ENCODE measurements at regions of chr11 and their contacts with region 1.

Region 1: DNA sequence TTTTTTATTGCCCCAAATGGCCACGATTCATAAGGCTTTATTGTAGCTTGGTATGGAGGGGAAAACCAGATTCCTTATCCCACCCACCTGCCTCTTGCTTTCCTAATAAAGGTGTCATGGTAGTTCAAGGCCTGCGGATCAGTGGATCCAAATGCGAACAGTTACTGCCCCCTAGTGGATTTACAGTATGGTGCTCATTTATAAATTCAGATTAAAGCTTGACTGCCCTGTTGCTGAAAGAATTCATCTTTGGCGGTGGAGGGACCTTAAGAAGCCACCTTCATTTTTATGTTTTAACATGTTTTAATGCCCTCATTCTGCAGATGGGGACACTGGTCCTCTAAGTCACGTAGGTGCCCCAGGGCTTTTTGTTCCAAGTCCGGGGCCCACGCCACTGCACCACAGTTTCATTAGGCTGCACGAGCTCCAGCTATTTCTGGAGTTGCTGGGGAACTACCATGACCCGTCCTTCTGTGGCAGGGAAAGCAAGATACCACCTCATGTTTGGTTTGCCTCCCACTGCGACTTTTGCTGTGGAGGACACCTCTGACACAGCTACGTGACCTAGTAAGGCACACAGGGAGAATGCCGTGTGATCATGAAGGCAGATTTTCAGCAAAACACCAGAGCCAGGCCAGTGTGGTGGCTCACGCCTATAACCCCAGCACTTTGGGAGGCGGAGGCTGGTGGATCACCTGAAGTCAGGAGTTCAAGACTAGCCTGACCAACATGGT is 15.6 kb upstream of the INCENP start:
- DNase-seq: peak; percentile 65
- ATAC-seq: peak; percentile 73
- H3K4me3 ChIP-seq: no peak overlapping the region
- H3K27ac ChIP-seq: no peak overlapping the region
- H3K4me1 ChIP-seq: peaks cover 30% of the 10 kb centered on the region
- H3K27me3 ChIP-seq: peaks cover 0 to 6% of the 10 kb centered on the region in 2 experiments; a peak in 2 of 5 replicates
- CTCF ChIP-seq: peak; percentile 84
- EP300 ChIP-seq: no peak
- POLR2A ChIP-seq: no peak
- RAD21 ChIP-seq: peak; percentile 76

Region 2: DNA sequence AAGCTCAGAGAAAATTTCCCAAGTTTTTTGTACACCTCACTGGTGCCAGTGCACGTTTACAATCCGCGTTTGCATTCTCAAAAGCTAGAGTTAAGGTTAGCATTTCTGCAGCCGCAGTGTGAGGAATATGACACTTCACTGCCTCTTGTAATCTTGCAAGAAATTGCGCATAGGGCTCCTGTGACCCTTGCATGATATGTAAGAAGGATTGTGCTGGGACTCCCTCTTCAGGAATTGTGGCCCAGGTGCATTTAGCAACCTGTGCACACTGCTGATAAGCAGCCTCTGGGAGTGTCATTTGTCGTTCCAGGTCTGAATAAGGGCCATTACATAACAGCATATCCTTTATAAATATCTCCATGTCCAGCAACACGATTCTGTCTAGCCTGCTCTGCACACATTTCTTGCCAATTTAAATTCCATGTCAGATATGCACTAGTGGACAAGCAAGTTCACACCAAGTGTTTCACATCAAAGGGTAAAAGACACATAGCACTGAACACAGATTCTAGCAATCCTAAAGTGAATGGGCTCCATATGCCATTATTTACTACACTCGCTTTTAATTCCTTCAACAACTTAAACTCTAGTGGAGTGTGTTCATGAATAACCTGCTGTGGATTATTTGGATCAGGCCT is 53.6 kb before region 1 on chr11:
- CTCF ChIA-PET with region 1: no interaction called
- POLR2A ChIA-PET with region 1: no interaction called
- in situ Hi-C with region 1: no loop called
- intact Hi-C with region 1: no loop called
- DNase-seq: peak; percentile 78
- ATAC-seq: peak; percentile 66; the same call in 2 of the 3 replicates
- H3K4me3 ChIP-seq: no peak overlapping the region
- H3K27ac ChIP-seq: no peak overlapping the region
- H3K4me1 ChIP-seq: peaks cover 27% of the 10 kb centered on the region
- H3K27me3 ChIP-seq: peaks cover 0 to 3% of the 10 kb centered on the region in 2 experiments; a peak in 2 of 5 replicates
- CTCF ChIP-seq: peak; percentile 91
- EP300 ChIP-seq: no peak
- POLR2A ChIP-seq: no peak
- RAD21 ChIP-seq: peak; percentile 82

Region 3: GRCh38 chr11:62081378-62082291 is 26.5 kb before region 1 on chr11:
- CTCF ChIA-PET with region 1: no interaction called
- POLR2A ChIA-PET with region 1: no interaction called
- in situ Hi-C with region 1: no loop called
- intact Hi-C with region 1: loop called (anchors 2 kb)
- DNase-seq: peak; percentile 46
- ATAC-seq: peak; percentile 71
- H3K4me3 ChIP-seq: no peak overlapping the region; a peak in 1 of 6 replicates
- H3K27ac ChIP-seq: no peak overlapping the region
- H3K4me1 ChIP-seq: peaks cover 6% of the 10 kb centered on the region; the same call in 1 of the 2 replicates
- H3K27me3 ChIP-seq: no peaks in the 10 kb centered on the region
- CTCF ChIP-seq: peak; percentile 92
- EP300 ChIP-seq: no peak
- POLR2A ChIP-seq: no peak
- RAD21 ChIP-seq: peak; percentile 89